Naive thymus-derived CD4-positive, alpha-beta T cell (primary cell): ENCODE measurements at regions of chr1 and their contacts with region 1.

Region 1: DNA sequence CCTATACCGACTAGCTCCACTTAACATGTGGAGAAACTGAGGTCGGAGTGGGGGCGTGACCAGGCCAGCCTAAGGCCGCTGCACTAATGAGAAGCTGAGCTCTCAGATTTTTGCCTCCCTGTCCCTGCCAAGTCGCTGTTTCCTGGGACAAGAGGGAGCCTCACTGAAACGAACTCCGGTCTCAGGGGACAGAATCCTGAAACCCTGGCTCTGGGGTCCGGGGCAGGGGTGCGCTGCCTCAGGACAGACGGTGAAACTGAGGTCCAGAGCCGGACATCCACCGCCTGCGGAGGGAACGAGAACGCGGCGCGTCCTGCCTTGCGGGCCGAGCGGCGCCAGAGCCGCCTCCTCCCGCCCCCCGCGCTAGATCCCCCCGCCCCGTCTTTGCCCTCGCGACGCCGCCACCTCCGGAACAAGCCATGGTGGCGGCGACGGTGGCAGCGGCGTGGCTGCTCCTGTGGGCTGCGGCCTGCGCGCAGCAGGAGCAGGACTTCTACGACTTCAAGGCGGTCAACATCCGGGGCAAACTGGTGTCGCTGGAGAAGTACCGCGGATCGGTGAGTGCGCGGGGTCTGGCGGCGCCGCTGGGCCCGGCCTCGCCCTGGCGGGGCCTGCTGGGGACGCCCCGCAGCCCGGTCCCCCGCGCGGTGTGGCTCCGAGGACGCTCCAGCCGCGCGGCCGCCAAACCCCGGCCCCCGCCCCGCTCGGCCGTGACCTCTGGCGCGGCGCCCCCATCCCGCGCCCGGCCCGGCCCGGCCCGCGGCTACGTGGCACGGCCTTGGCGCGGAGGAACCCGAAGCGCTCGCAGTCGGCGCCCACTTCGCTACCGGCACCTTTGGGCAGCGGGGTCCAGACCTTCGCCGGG is at the start of gene GPX7:
- DNase-seq: peak; percentile 45 to 68 (median 62)
- ATAC-seq: peak; percentile 84
- H3K4me3 ChIP-seq: peak within 1 kb of the TSS; percentile 83
- H3K4me3 Mint-ChIP-seq: peak within 1 kb of the TSS; percentile 91 to 95 (median 92)
- H3K27ac ChIP-seq: peak within 1 kb of the TSS; percentile 82
- H3K27ac Mint-ChIP-seq: peak within 1 kb of the TSS; percentile 85 to 97 (median 95)
- H3K4me1 ChIP-seq: peaks cover 25 to 29% of the 10 kb centered on the region in 2 donors
- H3K4me1 Mint-ChIP-seq: peaks cover 38 to 57% (median 50%) of the 10 kb centered on the region in 7 donors
- H3K27me3 ChIP-seq: no peaks in the 10 kb centered on the region
- H3K27me3 Mint-ChIP-seq: no peaks in the 10 kb centered on the region
- total RNA-seq, gene GPX7: 14.8 to 32.8 (median 29.2) TPM

Region 2: GRCh38 chr1:52520148-52520547 is 82.1 kb before region 1 on chr1:
- CTCF ChIA-PET with region 1: no interaction called
- POLR2A ChIA-PET with region 1: no interaction called
- intact Hi-C with region 1: loop called in 1 of 2 experiments (anchors 5 kb)
- DNase-seq: no peak
- ATAC-seq: no peak
- H3K4me3 ChIP-seq: no peak overlapping the region
- H3K4me3 Mint-ChIP-seq: no peak overlapping the region
- H3K27ac ChIP-seq: no peak overlapping the region
- H3K27ac Mint-ChIP-seq: peak overlapping the region in 5 of 9 donors; percentile 5 to 63 (median 28)
- H3K4me1 ChIP-seq: peaks cover 4 to 9% of the 10 kb centered on the region in 2 donors
- H3K4me1 Mint-ChIP-seq: peaks cover 13 to 55% (median 45%) of the 10 kb centered on the region in 7 donors
- H3K27me3 ChIP-seq: no peaks in the 10 kb centered on the region
- H3K27me3 Mint-ChIP-seq: no peaks in the 10 kb centered on the region

Region 3: DNA sequence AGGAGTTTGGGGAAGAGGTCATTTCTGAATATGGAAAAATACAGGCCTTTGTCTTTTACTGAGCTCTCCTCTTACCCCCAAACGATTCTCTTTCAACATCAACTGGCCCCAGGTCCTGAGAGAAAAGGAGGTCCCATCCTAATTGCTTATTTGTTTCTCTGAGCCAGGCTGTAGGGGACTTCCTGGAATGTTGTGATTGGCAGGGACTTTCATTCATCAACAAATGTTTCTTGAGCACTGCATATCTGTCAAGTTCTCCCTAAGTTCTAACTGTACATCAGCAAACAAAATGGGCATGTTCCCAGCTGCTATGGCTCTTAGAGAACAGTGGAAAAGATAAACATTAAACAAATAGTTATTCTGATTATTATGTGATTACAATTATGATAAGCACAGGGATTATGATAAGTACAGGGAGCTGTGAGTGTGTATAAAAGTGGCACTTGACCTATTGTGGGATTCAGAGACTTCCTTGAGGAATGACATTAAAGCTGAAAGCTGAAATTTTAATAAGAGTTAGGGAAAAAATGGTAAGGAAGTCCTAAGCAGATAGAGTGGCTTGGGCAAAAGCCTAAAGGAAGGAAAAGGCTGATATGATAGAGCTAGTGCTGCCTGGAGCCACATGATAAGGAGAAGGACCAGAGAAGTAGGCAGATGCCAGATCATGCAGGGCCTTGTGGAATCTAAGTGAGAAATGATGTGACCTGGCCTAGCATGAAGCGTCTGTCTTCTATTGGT is 11.6 kb after region 1 on chr1:
- CTCF ChIA-PET with region 1: no interaction called
- POLR2A ChIA-PET with region 1: interaction called, 9 read pairs
- intact Hi-C with region 1: loop called in 1 of 2 experiments (anchors 1 kb)
- DNase-seq: no peak
- ATAC-seq: no peak
- H3K4me3 ChIP-seq: no peak overlapping the region
- H3K4me3 Mint-ChIP-seq: no peak overlapping the region
- H3K27ac ChIP-seq: no peak overlapping the region
- H3K27ac Mint-ChIP-seq: peak overlapping the region; percentile 25 to 82 (median 61)
- H3K4me1 ChIP-seq: no peaks in the 10 kb centered on the region
- H3K4me1 Mint-ChIP-seq: peaks cover 8 to 44% (median 35%) of the 10 kb centered on the region in 7 donors
- H3K27me3 ChIP-seq: no peaks in the 10 kb centered on the region
- H3K27me3 Mint-ChIP-seq: no peaks in the 10 kb centered on the region

Region 4: DNA sequence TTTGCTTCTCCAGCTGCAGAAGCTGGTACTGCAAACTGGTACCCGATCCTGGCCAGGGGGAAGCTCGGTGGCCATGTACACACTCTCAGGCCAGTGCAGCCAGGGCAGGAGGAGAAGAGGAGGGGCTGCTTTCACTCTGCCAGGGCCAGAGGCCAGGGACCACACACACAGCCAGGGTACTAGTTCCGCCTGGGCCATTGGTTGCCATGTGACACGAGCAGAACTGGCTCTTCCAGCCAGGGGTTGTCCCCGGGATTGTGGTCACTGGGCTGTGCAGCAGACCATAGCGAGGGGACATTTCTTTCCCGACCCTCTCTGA is 27.1 kb after region 1 on chr1:
- CTCF ChIA-PET with region 1: interaction called, 6 read pairs
- POLR2A ChIA-PET with region 1: interaction called, 104 read pairs
- intact Hi-C with region 1: loop called in 1 of 2 experiments (anchors 1 kb)
- DNase-seq: no peak
- ATAC-seq: no peak
- H3K4me3 ChIP-seq: no peak overlapping the region
- H3K4me3 Mint-ChIP-seq: no peak overlapping the region
- H3K27ac ChIP-seq: no peak overlapping the region
- H3K27ac Mint-ChIP-seq: peak overlapping the region in 4 of 9 donors; percentile 18 to 88 (median 32)
- H3K4me1 ChIP-seq: peaks cover 20 to 21% of the 10 kb centered on the region in 2 donors
- H3K4me1 Mint-ChIP-seq: peaks cover 19 to 58% (median 50%) of the 10 kb centered on the region in 7 donors
- H3K27me3 ChIP-seq: no peaks in the 10 kb centered on the region
- H3K27me3 Mint-ChIP-seq: peaks cover 0 to 12% (median 0%) of the 10 kb centered on the region in 5 donors

Region 5: GRCh38 chr1:52651904-52652303 is 49.7 kb after region 1 on chr1:
- CTCF ChIA-PET with region 1: no interaction called
- POLR2A ChIA-PET with region 1: no interaction called
- intact Hi-C with region 1: no loop called
- DNase-seq: no peak
- ATAC-seq: no peak
- H3K4me3 ChIP-seq: no peak overlapping the region
- H3K4me3 Mint-ChIP-seq: no peak overlapping the region
- H3K27ac ChIP-seq: peak overlapping the region; percentile 18
- H3K27ac Mint-ChIP-seq: peak overlapping the region in 8 of 9 donors; percentile 43 to 92 (median 66)
- H3K4me1 ChIP-seq: no peaks in the 10 kb centered on the region
- H3K4me1 Mint-ChIP-seq: peaks cover 5 to 49% (median 23%) of the 10 kb centered on the region in 7 donors
- H3K27me3 ChIP-seq: no peaks in the 10 kb centered on the region
- H3K27me3 Mint-ChIP-seq: no peaks in the 10 kb centered on the region